Esophagus squamous epithelium (tissue), 5 donors: ENCODE measurements at regions of chr1 and their contacts with region 1.

Region 1: DNA sequence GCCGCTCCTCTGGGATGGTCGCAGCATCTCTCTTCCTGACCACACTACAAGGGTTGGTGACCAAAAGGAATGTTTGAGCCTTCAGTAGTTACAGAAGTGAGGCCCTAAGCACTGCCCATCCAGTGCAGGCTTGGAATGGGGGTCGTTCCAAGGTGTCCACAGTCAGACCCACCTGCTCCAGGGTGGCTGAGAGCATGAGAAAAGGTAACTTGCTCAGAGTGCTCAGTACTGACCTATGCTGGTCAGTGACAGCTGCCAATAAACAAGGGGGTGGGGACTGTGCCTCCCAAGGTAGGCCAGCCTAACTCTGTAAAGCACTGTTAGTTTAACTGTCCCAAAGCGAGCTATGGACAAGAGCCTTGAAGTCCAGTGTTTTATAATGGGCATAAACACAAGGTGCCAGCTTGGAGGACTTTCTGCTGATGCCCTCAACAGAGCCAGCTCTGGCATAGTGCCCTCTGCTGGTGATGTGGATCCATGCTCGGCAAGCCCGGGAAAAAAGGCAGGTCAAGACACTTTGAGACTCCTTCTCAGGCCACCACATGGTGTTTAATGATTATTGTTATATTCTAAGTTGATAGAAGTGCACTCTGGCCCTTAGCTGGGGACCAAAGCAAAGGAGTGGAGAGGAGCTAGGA is 78.1 kb upstream of the DNAH14 start:
- DNase-seq: no peak
- H3K4me3 ChIP-seq: no peak overlapping the region
- H3K27ac ChIP-seq: no peak overlapping the region
- H3K4me1 ChIP-seq: no peaks in the 10 kb centered on the region
- H3K27me3 ChIP-seq: no peaks in the 10 kb centered on the region
- CTCF ChIP-seq: peak in 5 of 6 experiments; percentile 37 to 61 (median 54)
- POLR2A ChIP-seq: no peak

Region 2: GRCh38 chr1:224519874-224520273 is 331.5 kb before region 1 on chr1:
- intact Hi-C with region 1: loop called (anchors 5 kb)
- DNase-seq: no peak
- H3K4me3 ChIP-seq: no peak overlapping the region
- H3K27ac ChIP-seq: no peak overlapping the region
- H3K4me1 ChIP-seq: no peaks in the 10 kb centered on the region
- H3K27me3 ChIP-seq: no peaks in the 10 kb centered on the region
- CTCF ChIP-seq: no peak
- POLR2A ChIP-seq: no peak

Region 3: DNA sequence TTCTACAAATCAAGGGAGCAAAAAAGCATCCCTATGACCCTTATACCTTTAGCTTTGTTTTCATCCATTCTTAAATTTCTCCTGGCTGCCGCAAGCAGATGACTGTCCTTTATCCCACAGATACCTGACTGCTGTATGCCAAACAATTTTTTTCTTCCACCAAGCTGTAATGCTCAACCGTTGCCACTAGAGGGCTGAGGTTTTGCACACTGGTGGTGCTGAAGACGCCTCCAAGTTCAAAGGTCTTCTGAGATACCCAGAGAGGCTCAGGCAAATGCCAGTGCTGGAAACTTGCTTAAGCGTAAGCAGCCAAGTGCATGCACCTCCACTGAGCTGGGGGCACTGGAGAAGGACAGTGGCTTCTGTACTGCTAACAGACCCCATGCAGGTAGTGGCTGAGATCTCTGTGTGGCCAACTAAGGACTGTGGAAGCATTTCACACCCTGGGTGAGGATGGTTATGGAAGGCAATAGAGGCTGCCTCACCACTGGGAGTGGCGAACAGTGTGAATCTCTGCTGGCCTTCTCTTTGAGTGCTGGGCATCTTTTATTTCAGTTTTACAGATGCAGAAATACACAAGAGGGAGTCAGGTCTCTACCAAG is 206.7 kb before region 1 on chr1:
- intact Hi-C with region 1: loop called (anchors 10 kb)
- DNase-seq: no peak
- H3K4me3 ChIP-seq: no peak overlapping the region
- H3K27ac ChIP-seq: no peak overlapping the region
- H3K4me1 ChIP-seq: no peaks in the 10 kb centered on the region
- H3K27me3 ChIP-seq: peaks cover 0 to 6% (median 0%) of the 10 kb centered on the region in 4 donors
- CTCF ChIP-seq: peak; percentile 55 to 87 (median 78)
- POLR2A ChIP-seq: no peak

Region 4: GRCh38 chr1:224939844-224940425 is 88.6 kb after region 1 on chr1:
- intact Hi-C with region 1: no loop called
- DNase-seq: no peak
- H3K4me3 ChIP-seq: no peak overlapping the region
- H3K27ac ChIP-seq: no peak overlapping the region
- H3K4me1 ChIP-seq: no peaks in the 10 kb centered on the region
- H3K27me3 ChIP-seq: no peaks in the 10 kb centered on the region
- CTCF ChIP-seq: no peak
- POLR2A ChIP-seq: no peak